Mammary epithelial cell (primary cell): ENCODE measurements at regions of chr11 and their contacts with region 1.

Region 1: GRCh38 chr11:119427279-119427678 is 4.3 kb upstream of the THY1 start:
- DNase-seq: no peak
- H3K4me3 ChIP-seq: no peak overlapping the region
- H3K27ac ChIP-seq: no peak overlapping the region
- H3K4me1 ChIP-seq: peaks cover 12% of the 10 kb centered on the region
- H3K27me3 ChIP-seq: no peaks in the 10 kb centered on the region
- CTCF ChIP-seq: no peak

Region 2: GRCh38 chr11:119262668-119263351 is 164.5 kb before region 1 on chr11:
- CTCF ChIA-PET with region 1: no interaction called
- dilution Hi-C with region 1: no loop called
- in situ Hi-C with region 1: no loop called
- intact Hi-C with region 1: no loop called
- DNase-seq: peak; percentile 31
- H3K4me3 ChIP-seq: no peak overlapping the region
- H3K27ac ChIP-seq: no peak overlapping the region
- H3K4me1 ChIP-seq: peaks cover 23% of the 10 kb centered on the region
- H3K27me3 ChIP-seq: no peaks in the 10 kb centered on the region
- CTCF ChIP-seq: peak; percentile 2 to 20

Region 3: GRCh38 chr11:119389611-119390254 is 37.5 kb before region 1 on chr11:
- CTCF ChIA-PET with region 1: interaction called, 12 read pairs
- dilution Hi-C with region 1: loop called (anchors 5 kb)
- in situ Hi-C with region 1: no loop called
- intact Hi-C with region 1: no loop called
- DNase-seq: no peak
- H3K4me3 ChIP-seq: no peak overlapping the region
- H3K27ac ChIP-seq: no peak overlapping the region
- H3K4me1 ChIP-seq: no peaks in the 10 kb centered on the region
- H3K27me3 ChIP-seq: no peaks in the 10 kb centered on the region
- CTCF ChIP-seq: peak; percentile 38 to 43

Region 4: DNA sequence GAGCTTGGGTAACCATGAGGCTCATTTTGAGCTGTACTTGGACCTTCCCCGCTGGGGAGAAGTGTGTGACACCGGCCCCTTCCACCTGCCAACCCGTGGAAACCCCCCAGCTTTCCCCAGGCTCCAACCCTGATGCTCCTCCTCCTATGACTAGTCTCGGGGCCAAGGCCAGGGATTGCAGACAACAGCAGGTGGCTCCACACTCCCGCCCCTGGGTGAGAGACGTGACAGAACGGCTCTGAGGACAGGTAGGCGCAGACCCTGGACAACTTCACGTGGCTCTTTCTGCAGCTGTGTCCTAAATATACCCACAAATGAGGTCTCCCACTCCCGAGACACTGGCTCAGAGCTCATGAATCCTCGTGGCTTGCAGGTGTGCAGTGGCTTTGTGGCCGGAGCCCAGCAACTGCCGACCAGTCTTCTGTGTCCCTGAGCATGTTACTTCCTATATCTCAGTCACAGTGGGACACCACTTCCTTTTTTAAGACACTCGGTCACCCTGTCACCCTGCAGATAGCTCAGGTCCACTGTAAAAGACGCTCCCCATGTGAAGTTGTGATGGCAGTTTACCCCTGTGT is 246.6 kb after region 1 on chr11:
- CTCF ChIA-PET with region 1: no interaction called
- dilution Hi-C with region 1: no loop called
- in situ Hi-C with region 1: no loop called
- intact Hi-C with region 1: no loop called
- DNase-seq: no peak
- H3K4me3 ChIP-seq: no peak overlapping the region
- H3K27ac ChIP-seq: no peak overlapping the region
- H3K4me1 ChIP-seq: peaks cover 38% of the 10 kb centered on the region
- H3K27me3 ChIP-seq: no peaks in the 10 kb centered on the region
- CTCF ChIP-seq: peak in 1 of 2 donors; percentile 30